ENCODE measurements at regions of chrX and their contacts with region 1.

Region 1: GRCh38 chrX:44872817-44873414 is at the start of gene KDM6A:
- DNase-seq: peak; percentile 97
- ATAC-seq: peak; percentile 91
- H3K4me3 Mint-ChIP-seq: peak within 1 kb of the TSS; percentile 92
- H3K27ac Mint-ChIP-seq: peak within 1 kb of the TSS; percentile 99
- H3K4me1 Mint-ChIP-seq: peaks cover 9% of the 10 kb centered on the region
- H3K27me3 Mint-ChIP-seq: no peaks in the 10 kb centered on the region
- total RNA-seq, gene KDM6A: 18.9 to 24.2 TPM

Region 2: DNA sequence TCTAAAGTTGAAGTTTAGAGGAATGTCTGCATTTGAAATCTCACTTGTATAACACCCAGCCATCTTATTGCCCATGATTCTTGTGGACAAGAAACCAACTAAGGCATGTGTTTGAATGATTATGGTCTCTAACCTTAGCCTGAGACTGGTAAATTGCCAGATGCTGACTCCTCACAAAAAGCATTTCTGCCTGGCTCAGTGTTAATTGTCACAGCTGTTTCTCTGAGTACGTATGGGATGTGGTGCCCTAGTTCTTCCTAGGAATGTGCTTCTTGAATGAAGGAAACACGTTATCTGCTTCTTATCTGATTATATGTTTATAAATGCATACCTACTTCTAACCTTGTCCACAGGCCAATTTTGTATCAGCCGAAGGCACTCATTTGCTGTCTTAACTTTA is 836.6 kb before region 1 on chrX:
- CTCF ChIA-PET with region 1: no interaction called
- POLR2A ChIA-PET with region 1: no interaction called
- intact Hi-C with region 1: no loop called
- DNase-seq: no peak
- ATAC-seq: no peak
- H3K4me3 Mint-ChIP-seq: no peak overlapping the region
- H3K27ac Mint-ChIP-seq: no peak overlapping the region
- H3K4me1 Mint-ChIP-seq: peaks cover 6% of the 10 kb centered on the region
- H3K27me3 Mint-ChIP-seq: no peaks in the 10 kb centered on the region

Region 3: GRCh38 chrX:44542567-44543325 is 330.2 kb before region 1 on chrX and contains the start of gene FUNDC1:
- CTCF ChIA-PET with region 1: no interaction called
- POLR2A ChIA-PET with region 1: no interaction called
- intact Hi-C with region 1: loop called in 1 of 2 experiments (anchors 2 kb)
- DNase-seq: peak; percentile 93
- ATAC-seq: peak; percentile 97
- H3K4me3 Mint-ChIP-seq: peak within 1 kb of the TSS; percentile 81
- H3K27ac Mint-ChIP-seq: peak within 1 kb of the TSS; percentile 85
- H3K4me1 Mint-ChIP-seq: peaks cover 18% of the 10 kb centered on the region
- H3K27me3 Mint-ChIP-seq: no peaks in the 10 kb centered on the region
- total RNA-seq, gene FUNDC1: 12.4 to 12.5 TPM

Region 4: GRCh38 chrX:44922980-44923379 is 50.1 kb after region 1 on chrX:
- CTCF ChIA-PET with region 1: no interaction called
- POLR2A ChIA-PET with region 1: no interaction called
- intact Hi-C with region 1: loop called (anchors 5 to 10 kb)
- DNase-seq: no peak
- ATAC-seq: peak; percentile 65
- H3K4me3 Mint-ChIP-seq: peak overlapping the region; percentile 47
- H3K27ac Mint-ChIP-seq: peak overlapping the region; percentile 75
- H3K4me1 Mint-ChIP-seq: peaks cover 46% of the 10 kb centered on the region
- H3K27me3 Mint-ChIP-seq: no peaks in the 10 kb centered on the region

Region 5: GRCh38 chrX:44997888-44998287 is 125.0 kb after region 1 on chrX:
- CTCF ChIA-PET with region 1: no interaction called
- POLR2A ChIA-PET with region 1: no interaction called
- intact Hi-C with region 1: loop called in 1 of 2 experiments (anchors 5 kb)
- DNase-seq: no peak
- ATAC-seq: peak; percentile 32
- H3K4me3 Mint-ChIP-seq: peak overlapping the region; percentile 13
- H3K27ac Mint-ChIP-seq: peak overlapping the region; percentile 85
- H3K4me1 Mint-ChIP-seq: peaks cover 66% of the 10 kb centered on the region
- H3K27me3 Mint-ChIP-seq: no peaks in the 10 kb centered on the region

Region 6: DNA sequence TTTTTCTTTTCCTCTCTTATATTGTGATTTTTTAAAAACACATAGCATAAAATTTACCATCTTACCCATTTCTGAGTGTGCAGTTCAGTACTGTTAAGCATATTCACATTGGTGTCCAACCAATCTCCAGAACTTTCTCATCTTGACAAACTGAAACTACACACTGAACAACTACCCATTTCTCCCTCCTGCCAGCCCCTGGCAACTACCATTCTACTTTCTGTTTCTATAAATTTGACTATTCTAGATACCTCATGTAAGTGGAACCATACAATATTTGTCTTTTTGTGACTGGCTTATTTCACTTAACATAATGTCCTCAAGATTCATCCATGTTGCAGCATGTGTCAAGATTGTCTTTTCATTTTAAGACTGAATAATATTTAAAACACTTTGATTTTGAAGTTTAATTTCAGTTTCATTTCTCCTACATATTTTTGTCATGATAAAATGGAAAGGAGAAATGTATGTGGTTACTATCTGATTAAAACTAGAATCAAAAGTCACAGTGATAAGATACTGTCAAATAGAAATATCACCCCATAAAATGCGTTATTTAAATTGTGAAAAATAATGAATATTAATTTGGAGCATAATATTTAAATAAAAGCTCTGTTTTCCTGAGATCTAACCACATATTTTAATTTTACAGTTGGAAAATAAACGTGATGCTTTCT is 205.0 kb after region 1 on chrX:
- CTCF ChIA-PET with region 1: no interaction called
- POLR2A ChIA-PET with region 1: no interaction called
- intact Hi-C with region 1: loop called in 1 of 2 experiments (anchors 5 kb)
- DNase-seq: peak; percentile 24
- ATAC-seq: peak; percentile 94
- H3K4me3 Mint-ChIP-seq: peak overlapping the region; percentile 8
- H3K27ac Mint-ChIP-seq: peak overlapping the region; percentile 86
- H3K4me1 Mint-ChIP-seq: peaks cover 35% of the 10 kb centered on the region
- H3K27me3 Mint-ChIP-seq: no peaks in the 10 kb centered on the region

Region 7: GRCh38 chrX:45769761-45770582 is 897.1 kb after region 1 on chrX:
- CTCF ChIA-PET with region 1: no interaction called
- POLR2A ChIA-PET with region 1: no interaction called
- intact Hi-C with region 1: loop called in 1 of 2 experiments (anchors 10 kb)
- DNase-seq: peak; percentile 60
- ATAC-seq: peak; percentile 63
- H3K4me3 Mint-ChIP-seq: peak overlapping the region; percentile 77
- H3K27ac Mint-ChIP-seq: peak overlapping the region; percentile 98
- H3K4me1 Mint-ChIP-seq: peaks cover 53% of the 10 kb centered on the region
- H3K27me3 Mint-ChIP-seq: no peaks in the 10 kb centered on the region